Sciatic nerve (tissue), 2 donors: ENCODE measurements at regions of chr10 and their contacts with region 1.

Region 1: DNA sequence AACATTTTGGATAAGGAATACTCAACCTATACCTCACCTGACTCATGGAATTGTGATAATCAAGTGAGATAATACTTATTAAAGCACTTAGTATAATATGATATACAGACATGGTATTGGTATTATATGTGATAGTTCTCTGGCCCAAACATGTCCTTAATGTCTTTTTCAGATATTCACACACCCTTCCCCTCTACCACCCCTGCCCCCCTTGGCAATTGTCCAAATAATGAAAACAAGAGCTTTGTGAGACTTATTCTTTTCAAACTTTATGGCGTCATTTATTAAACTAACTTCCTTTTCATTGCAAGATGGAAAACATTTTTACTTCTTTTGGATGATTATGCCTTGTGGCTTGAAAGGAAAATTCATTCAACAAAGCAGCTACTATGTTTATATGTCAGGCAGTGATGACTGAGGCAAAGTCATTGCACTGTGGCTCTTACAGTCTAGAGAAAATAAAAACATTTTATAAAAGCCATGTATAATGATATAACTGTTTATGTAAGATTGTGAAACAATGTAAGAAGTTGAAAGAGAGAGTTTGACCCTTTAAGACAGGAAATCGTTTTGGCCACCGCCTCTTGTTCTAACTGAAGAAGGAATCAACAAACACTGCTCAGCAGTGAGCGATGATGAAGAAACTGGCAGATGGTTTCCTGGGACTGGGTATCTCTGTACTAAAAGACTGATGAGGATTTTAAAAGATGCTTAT is 27.4 kb downstream of the MINPP1 start:
- DNase-seq: no peak
- ATAC-seq: peak; percentile 84

Region 2: GRCh38 chr10:87646939-87647338 is 114.9 kb after region 1 on chr10:
- intact Hi-C with region 1: no loop called
- DNase-seq: no peak
- ATAC-seq: no peak

Region 3: GRCh38 chr10:87740232-87740631 is 208.2 kb after region 1 on chr10:
- intact Hi-C with region 1: loop called (anchors 5 kb)
- DNase-seq: no peak
- ATAC-seq: peak; percentile 83

Region 4: GRCh38 chr10:88186335-88186734 is 654.3 kb after region 1 on chr10:
- intact Hi-C with region 1: loop called (anchors 5 kb)
- DNase-seq: no peak
- ATAC-seq: no peak